ENCODE measurements at regions of chr2 and their contacts with region 1.

Region 1: GRCh38 chr2:193267496-193268002 is 1072.8 kb upstream of the TMEFF2 start:
- DNase-seq: no peak
- H3K4me3 ChIP-seq: no peak overlapping the region
- H3K27ac ChIP-seq: no peak overlapping the region
- H3K4me1 ChIP-seq: no peaks in the 10 kb centered on the region
- H3K27me3 ChIP-seq: no peaks in the 10 kb centered on the region
- CTCF ChIP-seq: no peak
- POLR2A ChIP-seq: no peak

Region 2: GRCh38 chr2:191333911-191334357 is 1933.6 kb before region 1 on chr2:
- intact Hi-C with region 1: loop called (anchors 5 kb)
- DNase-seq: no peak
- H3K4me3 ChIP-seq: no peak overlapping the region
- H3K27ac ChIP-seq: peak overlapping the region; percentile 18
- H3K4me1 ChIP-seq: peaks cover 19% of the 10 kb centered on the region
- H3K27me3 ChIP-seq: no peaks in the 10 kb centered on the region
- CTCF ChIP-seq: no peak
- POLR2A ChIP-seq: no peak